H1 (cell line): ENCODE measurements at regions of chr11 and their contacts with region 1.

Region 1: DNA sequence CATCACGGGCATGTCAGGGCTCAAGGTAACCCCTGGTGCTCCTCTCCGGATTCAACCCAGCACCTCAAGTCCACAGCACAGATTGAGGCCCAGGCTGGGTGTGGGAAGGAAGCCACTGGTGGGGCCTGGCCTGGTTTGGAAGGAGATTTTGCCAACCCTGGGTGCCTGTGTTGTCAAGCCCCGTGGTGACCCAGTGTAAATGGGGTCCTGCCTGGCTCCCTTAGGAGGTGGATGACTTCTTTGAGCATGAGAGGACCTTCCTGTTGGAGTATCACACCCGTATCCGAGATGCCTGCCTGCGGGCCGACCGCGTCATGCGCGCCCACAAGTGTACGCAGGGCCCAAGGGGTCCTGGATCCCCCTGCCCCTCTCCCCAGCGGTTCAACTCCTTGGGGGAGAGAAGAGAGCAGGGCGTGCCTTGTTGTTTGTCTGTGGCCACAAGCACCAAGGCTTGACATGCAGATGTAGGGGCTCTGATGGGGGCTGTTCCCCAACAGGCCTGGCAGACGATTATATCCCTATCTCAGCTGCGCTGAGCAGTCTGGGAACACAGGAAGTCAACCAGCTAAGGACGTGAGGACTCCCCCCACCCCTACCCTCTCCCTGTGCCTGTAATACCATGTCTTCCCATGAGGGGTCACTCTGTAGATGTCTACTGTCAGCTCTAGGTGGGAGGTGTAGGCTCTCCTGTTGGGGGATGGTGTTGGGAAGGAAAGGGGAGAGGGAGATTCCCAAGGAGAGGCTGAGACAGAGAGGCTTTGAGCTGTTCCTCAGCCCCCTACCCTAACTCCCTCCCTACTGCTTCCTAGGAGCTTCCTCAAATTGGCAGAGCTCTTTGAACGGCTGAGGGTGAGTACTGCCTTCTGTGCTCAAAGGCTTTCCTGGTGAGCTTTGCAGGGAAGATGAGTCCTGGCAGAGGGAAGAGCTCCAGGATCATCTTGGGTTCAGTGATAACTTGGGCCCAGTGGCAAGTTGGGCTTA is 6.9 kb downstream of the CFL1 start:
- DNase-seq: peak in 1 of 2 experiments; percentile 93
- H3K4me3 ChIP-seq: no peak overlapping the region
- H3K27ac ChIP-seq: no peak overlapping the region
- H3K4me1 ChIP-seq: peaks cover 0 to 5% (median under 1%) of the 10 kb centered on the region in 4 experiments; a peak in 5 of 7 replicates
- H3K27me3 ChIP-seq: no peaks in the 10 kb centered on the region; a peak in 1 of 7 replicates
- CTCF ChIP-seq: peak in 2 of 3 experiments; percentile 69 to 88; a peak in 3 of 4 replicates
- EP300 ChIP-seq: no peak
- POLR2A ChIP-seq: peak in 1 of 2 experiments; percentile 27; a peak in 2 of 3 replicates
- RAD21 ChIP-seq: peak; percentile 32 to 48; a peak in 3 of 4 replicates

Region 2: GRCh38 chr11:65711785-65712632 is 139.1 kb before region 1 on chr11 and contains the start of gene KAT5:
- CTCF ChIA-PET with region 1: interaction called, 18 read pairs
- POLR2A ChIA-PET with region 1: interaction called, 4 read pairs
- DNase-seq: peak; percentile 91 to 100
- H3K4me3 ChIP-seq: peak within 1 kb of the TSS; percentile 62 to 87 (median 74)
- H3K27ac ChIP-seq: peak within 1 kb of the TSS; percentile 99
- H3K4me1 ChIP-seq: peaks cover 0 to 2% (median 2%) of the 10 kb centered on the region in 4 experiments; a peak in 1 of 7 replicates
- H3K27me3 ChIP-seq: no peaks in the 10 kb centered on the region
- CTCF ChIP-seq: peak; percentile 95 to 96 (median 95)
- EP300 ChIP-seq: 0 out of 3 replicates have a peak, but pooled peaks of 1 of the 2 experiments have one; percentile 60
- POLR2A ChIP-seq: peak; percentile 86 to 88
- RAD21 ChIP-seq: peak; percentile 94 to 96
- total RNA-seq, gene KAT5: 36.4 and 37.4 TPM in 2 replicates

Region 3: DNA sequence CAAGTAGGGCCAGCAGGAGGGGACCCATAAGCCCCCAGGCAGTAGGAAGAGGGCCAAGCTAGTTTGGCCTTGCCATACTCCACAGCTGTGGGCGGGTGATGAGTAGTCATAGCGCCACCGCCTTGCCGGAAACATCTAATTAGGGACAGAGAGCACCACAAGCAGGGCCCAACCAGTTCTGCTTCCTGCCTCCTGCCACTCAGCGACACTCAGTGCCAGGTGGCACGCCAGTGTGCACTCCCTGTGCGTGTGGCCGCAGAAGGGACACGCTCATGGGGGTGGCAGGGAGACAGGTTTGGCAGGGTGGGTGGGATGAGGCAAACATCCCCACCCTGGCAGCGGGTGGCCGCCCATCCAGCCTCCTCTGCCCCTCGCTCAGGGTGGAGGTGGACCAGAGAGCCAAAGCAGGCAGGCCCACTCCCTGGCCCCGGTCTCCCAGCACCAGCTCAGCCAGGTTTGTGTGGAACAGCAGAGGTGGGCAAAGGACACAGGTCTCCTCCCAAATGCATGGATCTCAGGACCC is 59.4 kb before region 1 on chr11:
- CTCF ChIA-PET with region 1: interaction called, 4 read pairs
- POLR2A ChIA-PET with region 1: interaction called, 11 read pairs
- DNase-seq: no peak
- H3K4me3 ChIP-seq: no peak overlapping the region
- H3K27ac ChIP-seq: no peak overlapping the region
- H3K4me1 ChIP-seq: peaks cover 14 to 25% (median 22%) of the 10 kb centered on the region in 4 experiments
- H3K27me3 ChIP-seq: peaks cover 5 to 22% (median 18%) of the 10 kb centered on the region in 4 experiments
- CTCF ChIP-seq: no peak
- EP300 ChIP-seq: no peak
- POLR2A ChIP-seq: no peak
- RAD21 ChIP-seq: no peak

Region 4: DNA sequence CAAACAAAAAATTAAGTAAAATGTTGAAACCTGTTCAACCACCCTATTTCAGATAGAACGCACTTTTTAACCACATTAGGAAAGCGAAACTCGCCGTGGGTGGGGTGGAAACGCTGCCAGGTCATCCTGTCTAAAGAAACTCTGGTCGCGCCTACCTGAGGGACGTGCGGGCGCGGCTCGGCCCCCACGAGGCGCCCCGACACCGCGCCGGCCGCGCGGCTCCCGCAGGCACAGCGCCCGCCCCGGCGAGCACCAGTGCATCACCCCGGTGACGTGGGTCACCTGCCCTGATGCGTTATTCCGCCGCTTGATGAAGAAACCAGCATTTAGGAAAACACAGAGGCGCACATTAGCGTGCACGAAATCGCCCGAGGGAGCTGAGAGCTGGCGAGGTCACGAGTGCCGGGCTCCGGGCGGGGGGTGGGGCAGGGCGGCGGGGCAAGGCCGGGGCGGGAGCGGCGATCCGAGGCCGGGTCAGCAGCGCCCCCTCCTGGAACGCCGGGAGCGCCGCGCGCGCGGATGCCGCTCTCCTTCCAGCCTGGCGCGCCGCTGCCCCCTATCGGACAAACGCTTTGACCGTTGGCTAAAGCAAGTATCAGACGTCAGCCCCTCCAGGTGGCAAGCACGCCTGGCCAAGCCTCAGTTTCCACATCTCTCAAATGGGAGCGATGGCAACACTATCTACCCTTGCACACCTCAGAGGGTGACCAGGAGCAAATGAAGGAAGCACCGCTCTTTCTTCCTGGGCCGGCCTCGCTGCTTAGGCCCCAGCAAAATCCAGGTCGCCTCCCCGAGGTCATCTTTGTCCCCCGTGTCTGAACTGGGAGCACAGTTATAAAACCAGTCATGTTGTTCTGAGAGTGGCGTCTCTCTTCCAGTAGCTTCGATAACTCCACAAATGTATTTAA is 33.0 kb before region 1 on chr11:
- CTCF ChIA-PET with region 1: interaction called, 16 read pairs
- POLR2A ChIA-PET with region 1: interaction called, 7 read pairs
- DNase-seq: peak; percentile 53 to 99
- H3K4me3 ChIP-seq: peak overlapping the region; percentile 41 to 74 (median 67)
- H3K27ac ChIP-seq: no peak overlapping the region
- H3K4me1 ChIP-seq: no peaks in the 10 kb centered on the region
- H3K27me3 ChIP-seq: peaks cover 0 to 11% (median 4%) of the 10 kb centered on the region in 4 experiments; a peak in 4 of 7 replicates
- CTCF ChIP-seq: peak; percentile 99 to 100 (median 99)
- EP300 ChIP-seq: peak in 1 of 2 experiments; percentile 28; a peak in 1 of 3 replicates
- POLR2A ChIP-seq: no peak
- RAD21 ChIP-seq: peak; percentile 91 to 95

Region 5: DNA sequence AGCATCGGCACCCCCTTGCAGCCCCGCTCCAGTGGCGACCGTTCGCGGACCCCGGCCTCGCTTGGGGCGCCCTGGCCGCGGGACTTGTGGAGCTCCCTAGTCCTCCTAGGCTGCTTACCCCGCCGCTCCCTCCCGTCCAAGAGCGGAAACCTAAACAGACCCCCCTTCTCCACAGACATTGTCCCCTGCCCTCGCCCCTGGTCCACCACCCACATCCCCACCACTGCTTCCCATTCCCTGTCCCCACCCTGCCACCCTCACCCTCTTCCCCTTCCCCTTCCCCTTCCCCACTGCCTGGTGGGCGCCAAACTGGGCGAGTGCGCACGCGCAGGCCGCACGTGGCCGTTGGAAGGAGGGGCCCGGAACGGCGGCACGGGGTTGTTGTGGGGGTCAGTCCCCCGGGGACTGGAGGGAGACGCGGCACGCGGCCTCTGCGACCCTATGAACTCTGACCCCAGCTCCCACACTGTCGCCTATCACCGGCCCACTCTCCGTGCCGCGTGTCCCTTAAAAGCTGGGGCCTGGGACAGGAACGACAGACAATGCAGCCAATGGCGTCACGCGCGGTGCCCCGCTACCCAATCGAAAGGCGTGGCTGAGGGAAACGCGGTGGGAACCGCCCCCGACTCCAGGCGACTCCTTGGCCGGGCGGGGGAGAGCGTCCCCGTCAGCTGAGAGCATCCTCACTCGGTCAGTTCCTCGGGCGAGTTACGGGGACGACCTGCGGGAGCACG is 17.7 kb before region 1 on chr11 and contains the start of gene SNX32:
- CTCF ChIA-PET with region 1: interaction called, 52 read pairs
- POLR2A ChIA-PET with region 1: interaction called, 1,071 read pairs
- DNase-seq: peak in 1 of 2 experiments; percentile 97
- H3K4me3 ChIP-seq: peak within 1 kb of the TSS; percentile 68 to 72 (median 70)
- H3K27ac ChIP-seq: peak within 1 kb of the TSS; percentile 70; the same call in 1 of the 2 replicates
- H3K4me1 ChIP-seq: peaks cover 0 to 8% (median 6%) of the 10 kb centered on the region in 4 experiments; a peak in 6 of 7 replicates
- H3K27me3 ChIP-seq: peaks cover 0 to 9% (median 6%) of the 10 kb centered on the region in 4 experiments; a peak in 4 of 7 replicates
- CTCF ChIP-seq: no peak
- EP300 ChIP-seq: no peak
- POLR2A ChIP-seq: peak in 1 of 2 experiments; percentile 41; a peak in 1 of 3 replicates
- RAD21 ChIP-seq: no peak
- total RNA-seq, gene SNX32: 1.1 and 2.2 TPM in 2 replicates

Region 6: DNA sequence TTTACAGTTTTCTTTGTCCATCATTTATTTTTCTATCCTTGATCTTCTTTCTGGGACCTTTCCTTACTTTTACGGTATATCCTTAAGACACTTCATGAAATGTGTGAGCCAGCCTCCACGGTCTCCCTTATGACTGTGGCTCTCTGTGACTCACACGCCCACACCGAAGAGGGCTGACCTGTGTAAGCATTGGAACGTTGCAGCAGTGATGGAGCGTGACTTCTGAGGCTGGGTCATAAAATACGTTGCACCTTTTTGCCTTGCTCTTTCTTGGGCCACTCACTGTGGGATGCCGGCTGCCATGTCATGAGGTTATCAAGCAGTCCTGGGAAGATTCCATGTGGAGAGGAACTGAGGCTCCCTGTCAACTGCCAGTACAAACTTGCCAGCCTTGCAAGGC is 321.0 kb after region 1 on chr11:
- CTCF ChIA-PET with region 1: no interaction called
- POLR2A ChIA-PET with region 1: no interaction called
- DNase-seq: no peak
- H3K4me3 ChIP-seq: no peak overlapping the region
- H3K27ac ChIP-seq: no peak overlapping the region
- H3K4me1 ChIP-seq: no peaks in the 10 kb centered on the region
- H3K27me3 ChIP-seq: no peaks in the 10 kb centered on the region
- CTCF ChIP-seq: no peak
- EP300 ChIP-seq: no peak
- POLR2A ChIP-seq: no peak
- RAD21 ChIP-seq: no peak